Pancreas (tissue), 10 donors: ENCODE measurements at regions of chr12 and their contacts with region 1.

Region 1: GRCh38 chr12:108803428-108804105 is 53.8 kb downstream of the SSH1 start:
- DNase-seq: peak in 4 of 6 donors; percentile 55 to 79 (median 67)
- ATAC-seq: peak; percentile 87 to 94 (median 94)
- H3K4me3 ChIP-seq: no peak overlapping the region
- H3K27ac ChIP-seq: peak overlapping the region in 2 of 4 donors; percentile 34 to 50
- H3K4me1 ChIP-seq: no peaks in the 10 kb centered on the region
- H3K27me3 ChIP-seq: no peaks in the 10 kb centered on the region
- CTCF ChIP-seq: peak; percentile 76 to 98 (median 88)

Region 2: DNA sequence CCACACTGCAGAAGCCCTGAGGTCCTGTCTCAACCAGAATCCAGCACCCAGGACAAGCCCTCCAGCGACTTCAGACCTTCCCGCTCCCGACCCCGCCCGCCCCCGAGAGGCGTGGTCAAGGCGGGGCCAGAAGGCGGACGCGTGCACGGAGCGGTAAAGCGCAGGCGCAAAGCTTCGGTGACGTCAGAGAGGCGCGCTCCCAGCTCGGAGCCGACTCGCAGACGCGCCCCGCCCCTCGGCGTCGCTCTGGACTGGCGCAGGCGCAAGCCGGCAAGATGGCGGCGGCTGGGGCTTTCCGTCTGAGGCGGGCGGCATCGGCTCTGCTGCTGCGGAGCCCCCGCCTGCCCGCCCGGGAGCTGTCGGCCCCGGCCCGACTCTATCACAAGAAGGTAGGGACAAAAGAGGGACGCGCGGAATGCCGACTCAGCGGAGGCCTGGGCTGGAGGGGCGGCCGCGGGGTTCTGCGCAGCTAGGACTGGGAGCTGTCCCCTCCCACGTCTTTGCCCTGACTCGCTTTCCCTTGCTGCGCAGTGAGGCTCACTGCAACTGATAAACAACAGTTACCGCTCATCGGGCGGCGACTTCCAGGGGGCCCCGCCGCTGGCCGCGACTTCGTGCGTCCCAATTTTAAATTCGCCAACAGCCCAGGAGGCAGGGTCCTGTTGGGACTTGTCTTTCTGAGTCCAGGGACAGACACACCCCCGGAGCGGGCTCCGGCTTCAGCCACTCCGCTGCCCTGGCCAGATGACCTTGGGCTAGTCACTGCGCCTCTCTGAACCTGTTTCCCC is 241.0 kb before region 1 on chr12 and contains the start of gene ISCU:
- intact Hi-C with region 1: loop called in 1 of 3 experiments (anchors 10 kb)
- DNase-seq: peak; percentile 96 to 100 (median 99)
- ATAC-seq: peak; percentile 83 to 92 (median 86)
- H3K4me3 ChIP-seq: peak within 1 kb of the TSS; percentile 76 to 97 (median 92)
- H3K27ac ChIP-seq: peak within 1 kb of the TSS; percentile 87 to 94 (median 92)
- H3K4me1 ChIP-seq: peaks cover 10 to 28% (median 17%) of the 10 kb centered on the region in 3 donors
- H3K27me3 ChIP-seq: no peaks in the 10 kb centered on the region
- CTCF ChIP-seq: no peak
- total RNA-seq, gene ISCU: 34.1 to 66.7 (median 41.4) TPM

Region 3: GRCh38 chr12:108664338-108665258 is 139.0 kb before region 1 on chr12:
- intact Hi-C with region 1: loop called (anchors 5 to 10 kb)
- DNase-seq: peak in 4 of 6 donors; percentile 62 to 89 (median 72)
- ATAC-seq: peak; percentile 94 to 98 (median 97)
- H3K4me3 ChIP-seq: no peak overlapping the region
- H3K27ac ChIP-seq: peak overlapping the region in 2 of 4 donors; percentile 48 to 53
- H3K4me1 ChIP-seq: peaks cover 0 to 20% (median 6%) of the 10 kb centered on the region in 3 donors
- H3K27me3 ChIP-seq: no peaks in the 10 kb centered on the region
- CTCF ChIP-seq: peak; percentile 68 to 85 (median 80)